Breast epithelium (tissue), 4 donors: ENCODE measurements at regions of chr7 and their contacts with region 1.

Region 1: GRCh38 chr7:17725796-17726195 is 214.5 kb downstream of the SNX13 start:
- DNase-seq: no peak
- H3K4me3 ChIP-seq: no peak overlapping the region
- H3K27ac ChIP-seq: no peak overlapping the region
- H3K4me1 ChIP-seq: no peaks in the 10 kb centered on the region
- H3K27me3 ChIP-seq: no peaks in the 10 kb centered on the region
- CTCF ChIP-seq: no peak
- POLR2A ChIP-seq: no peak

Region 2: GRCh38 chr7:17680943-17681351 is 44.8 kb before region 1 on chr7:
- intact Hi-C with region 1: no loop called
- DNase-seq: no peak
- H3K4me3 ChIP-seq: no peak overlapping the region
- H3K27ac ChIP-seq: no peak overlapping the region
- H3K4me1 ChIP-seq: no peaks in the 10 kb centered on the region
- H3K27me3 ChIP-seq: no peaks in the 10 kb centered on the region
- CTCF ChIP-seq: peak; percentile 54 to 66 (median 65)
- POLR2A ChIP-seq: no peak

Region 3: DNA sequence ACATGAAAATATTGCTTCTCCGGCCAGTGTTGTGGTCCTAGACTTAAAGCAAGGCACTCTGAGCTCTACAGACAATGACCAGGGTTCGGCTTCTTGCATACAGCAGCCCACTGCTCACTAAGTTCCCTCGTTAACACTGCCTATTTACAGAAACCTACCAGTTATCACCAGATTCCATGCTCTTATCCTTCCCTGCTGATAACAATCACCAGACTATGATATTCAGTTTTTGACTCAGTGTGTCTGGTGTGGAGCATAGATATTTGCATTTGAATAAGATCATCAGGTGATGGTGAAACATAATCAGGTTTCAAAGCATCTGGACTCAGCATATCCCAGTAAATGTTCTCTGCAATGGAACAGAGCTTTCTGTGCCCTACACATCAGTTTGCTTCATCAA is 32.2 kb after region 1 on chr7:
- intact Hi-C with region 1: loop called (anchors 1 kb)
- DNase-seq: no peak
- H3K4me3 ChIP-seq: no peak overlapping the region
- H3K27ac ChIP-seq: no peak overlapping the region
- H3K4me1 ChIP-seq: no peaks in the 10 kb centered on the region
- H3K27me3 ChIP-seq: no peaks in the 10 kb centered on the region
- CTCF ChIP-seq: no peak
- POLR2A ChIP-seq: no peak

Region 4: GRCh38 chr7:17786314-17786852 is 60.6 kb after region 1 on chr7:
- intact Hi-C with region 1: loop called (anchors 2 kb)
- DNase-seq: no peak
- H3K4me3 ChIP-seq: no peak overlapping the region
- H3K27ac ChIP-seq: no peak overlapping the region
- H3K4me1 ChIP-seq: no peaks in the 10 kb centered on the region
- H3K27me3 ChIP-seq: no peaks in the 10 kb centered on the region
- CTCF ChIP-seq: no peak
- POLR2A ChIP-seq: no peak

Region 5: GRCh38 chr7:19572566-19572965 is 1846.8 kb after region 1 on chr7:
- intact Hi-C with region 1: no loop called
- DNase-seq: no peak
- H3K4me3 ChIP-seq: no peak overlapping the region
- H3K27ac ChIP-seq: no peak overlapping the region
- H3K4me1 ChIP-seq: no peaks in the 10 kb centered on the region
- H3K27me3 ChIP-seq: no peaks in the 10 kb centered on the region
- CTCF ChIP-seq: no peak
- POLR2A ChIP-seq: no peak